Right ventricle myocardium inferior (tissue), 1 donor: ENCODE measurements at regions of chr3 and their contacts with region 1.

Region 1: GRCh38 chr3:61448378-61448777 is 113.0 kb upstream of the PTPRG start:
- DNase-seq: no peak
- ATAC-seq: peak; percentile 86

Region 2: DNA sequence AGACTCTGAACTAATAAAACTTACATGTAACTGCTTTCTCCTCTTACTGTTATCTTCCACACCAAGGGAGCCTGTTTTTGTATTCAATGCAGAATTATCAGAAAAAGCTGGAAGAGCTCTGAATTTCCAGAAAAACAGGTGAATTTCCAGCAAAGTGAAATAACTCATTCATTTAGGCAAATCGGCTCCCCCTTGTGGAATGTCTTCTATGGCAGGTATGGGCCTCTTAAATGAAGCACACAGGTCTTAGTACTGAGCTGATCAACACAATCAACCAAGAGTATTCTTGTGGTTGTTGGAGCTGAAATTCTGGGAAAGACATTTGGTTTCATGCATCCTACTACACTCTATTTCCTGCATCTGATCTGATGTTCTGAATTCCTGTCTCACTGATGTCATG is 82.0 kb after region 1 on chr3:
- intact Hi-C with region 1: loop called (anchors 5 kb)
- DNase-seq: no peak
- ATAC-seq: no peak

Region 3: GRCh38 chr3:61725851-61726333 is 277.5 kb after region 1 on chr3:
- intact Hi-C with region 1: loop called (anchors 10 kb)
- DNase-seq: no peak
- ATAC-seq: peak; percentile 88

Region 4: DNA sequence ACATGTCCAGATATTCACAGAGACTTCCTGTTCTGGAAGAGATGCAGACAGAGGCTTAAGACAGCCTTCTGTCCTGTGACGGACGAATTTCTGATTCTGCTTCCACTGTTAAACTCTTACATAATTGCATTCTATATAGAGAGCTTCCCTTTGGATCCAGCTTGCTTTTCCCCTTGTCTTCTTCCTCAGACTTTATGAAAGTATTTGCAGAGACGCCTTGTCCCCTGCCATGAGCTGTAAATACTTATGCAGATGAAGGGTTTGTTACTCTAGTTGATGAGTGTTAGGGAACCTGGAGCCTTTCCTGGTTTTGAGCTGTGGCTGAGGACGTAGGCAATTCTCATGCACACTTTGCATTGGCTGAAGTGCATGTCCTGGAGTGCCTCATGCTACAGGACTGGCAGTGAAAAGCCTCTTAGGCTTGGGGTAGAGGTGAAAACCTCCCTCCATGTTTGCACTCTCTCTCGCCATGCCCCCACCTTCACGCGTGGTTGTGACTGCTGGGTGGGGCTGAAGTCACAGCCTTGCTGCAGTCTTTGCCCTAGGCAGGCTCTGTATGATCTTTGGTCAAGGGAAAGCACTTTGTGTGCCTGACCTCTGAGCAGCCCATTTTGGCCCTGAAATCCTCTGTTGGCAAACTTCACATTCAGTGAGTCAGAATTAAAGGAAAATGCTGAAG is 399.5 kb after region 1 on chr3:
- intact Hi-C with region 1: loop called (anchors 10 kb)
- DNase-seq: peak; percentile 82
- ATAC-seq: peak; percentile 94

Region 5: GRCh38 chr3:62188681-62189383 is 740.5 kb after region 1 on chr3:
- intact Hi-C with region 1: loop called (anchors 10 kb)
- DNase-seq: peak; percentile 81
- ATAC-seq: peak; percentile 47